K562 (cell line): ENCODE measurements at regions of chr16 and their contacts with region 1.

Region 1: GRCh38 chr16:61050547-61050946 is 985.7 kb downstream of the CDH8 start:
- DNase-seq: no peak
- ATAC-seq: no peak
- H3K4me3 ChIP-seq: no peak overlapping the region
- H3K27ac ChIP-seq: no peak overlapping the region
- H3K4me1 ChIP-seq: no peaks in the 10 kb centered on the region
- H3K27me3 ChIP-seq: no peaks in the 10 kb centered on the region
- CTCF ChIP-seq: no peak
- EP300 ChIP-seq: no peak
- POLR2A ChIP-seq: no peak
- RAD21 ChIP-seq: no peak

Region 2: DNA sequence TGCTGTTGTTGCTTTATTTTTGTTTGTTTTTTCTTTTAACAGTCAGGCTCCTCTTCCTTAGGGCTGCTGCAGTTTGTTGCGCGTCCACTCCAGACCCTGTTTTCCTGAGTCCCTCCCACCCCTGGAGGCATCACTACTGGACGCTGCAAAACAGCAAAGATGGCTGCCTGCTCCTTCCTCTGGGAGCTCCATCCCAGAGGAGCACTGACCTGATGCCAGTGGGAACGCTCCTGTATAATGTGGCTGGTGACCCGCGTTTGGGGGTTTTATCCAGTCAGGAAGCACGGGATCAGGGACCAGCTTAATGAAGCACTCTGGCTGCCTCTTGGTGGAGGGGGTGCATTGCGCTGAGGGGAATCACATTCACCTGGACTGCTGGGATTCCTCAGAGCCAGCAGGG is 19.9 kb before region 1 on chr16:
- CTCF ChIA-PET with region 1: no interaction called
- POLR2A ChIA-PET with region 1: no interaction called
- in situ Hi-C with region 1: no loop called
- intact Hi-C with region 1: loop called (anchors 1 kb)
- DNase-seq: no peak
- ATAC-seq: no peak
- H3K4me3 ChIP-seq: no peak overlapping the region
- H3K27ac ChIP-seq: no peak overlapping the region
- H3K4me1 ChIP-seq: no peaks in the 10 kb centered on the region
- H3K27me3 ChIP-seq: no peaks in the 10 kb centered on the region
- CTCF ChIP-seq: no peak
- EP300 ChIP-seq: no peak
- POLR2A ChIP-seq: no peak
- RAD21 ChIP-seq: no peak